Uterus (tissue), 4 donors: ENCODE measurements at regions of chr1 and their contacts with region 1.

Region 1: DNA sequence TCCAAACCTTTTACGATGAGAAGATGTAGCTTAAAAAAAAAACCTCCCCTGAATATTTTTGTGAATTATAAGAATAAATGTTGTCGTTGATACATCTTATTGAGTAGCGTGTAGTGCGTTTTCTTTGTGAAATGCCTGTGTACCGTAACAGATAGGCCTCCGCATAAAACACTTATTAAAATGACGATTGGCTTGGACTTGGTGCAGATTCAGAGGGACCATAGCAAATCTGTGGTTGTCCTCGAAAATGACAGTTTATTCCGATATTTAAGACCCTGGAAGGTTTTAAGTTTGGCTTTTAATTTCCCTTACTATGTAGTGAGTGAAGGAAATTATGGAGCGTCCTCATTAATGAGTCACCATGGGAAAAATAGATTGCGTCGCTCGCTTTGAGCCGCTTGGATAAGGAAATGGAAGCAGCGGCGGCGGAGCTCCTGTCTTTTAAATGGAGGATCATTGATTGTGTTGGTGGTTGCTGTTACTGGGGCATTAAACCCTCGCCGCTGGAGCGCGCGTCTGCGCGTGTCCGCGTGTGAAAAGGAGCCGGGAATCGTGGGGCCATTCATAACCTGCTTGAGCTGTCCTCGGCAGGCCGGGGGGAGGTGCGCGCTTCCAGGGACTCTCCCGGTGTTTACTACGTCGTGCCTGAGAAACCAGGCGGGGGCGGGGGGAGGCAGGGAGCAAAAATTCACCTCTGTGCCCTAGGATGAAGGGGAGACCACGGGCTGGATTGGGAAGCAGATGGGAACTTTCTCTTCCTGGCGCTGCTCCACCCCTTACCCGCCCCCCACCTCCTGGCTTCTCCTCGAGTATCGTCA is 1.7 kb downstream of the SPEN start:
- DNase-seq: peak; percentile 80 to 83
- H3K4me3 ChIP-seq: peak overlapping the region; percentile 74 to 94
- H3K27ac ChIP-seq: peak overlapping the region; percentile 91 to 99
- H3K4me1 ChIP-seq: peaks cover 9 to 11% of the 10 kb centered on the region in 2 donors
- H3K27me3 ChIP-seq: no peaks in the 10 kb centered on the region
- CTCF ChIP-seq: peak in 1 of 4 experiments; percentile 21
- POLR2A ChIP-seq: peak; percentile 61 to 73

Region 2: GRCh38 chr1:15833069-15833679 is 16.0 kb before region 1 on chr1:
- intact Hi-C with region 1: loop called (anchors 2 kb)
- DNase-seq: peak; percentile 59 to 60
- H3K4me3 ChIP-seq: peak overlapping the region; percentile 66 to 96
- H3K27ac ChIP-seq: peak overlapping the region; percentile 99 to 100
- H3K4me1 ChIP-seq: peaks cover 6 to 15% of the 10 kb centered on the region in 2 donors
- H3K27me3 ChIP-seq: no peaks in the 10 kb centered on the region
- CTCF ChIP-seq: no peak
- POLR2A ChIP-seq: no peak